Sigmoid colon (tissue), 7 donors: ENCODE measurements at regions of chr2 and their contacts with region 1.

Region 1: DNA sequence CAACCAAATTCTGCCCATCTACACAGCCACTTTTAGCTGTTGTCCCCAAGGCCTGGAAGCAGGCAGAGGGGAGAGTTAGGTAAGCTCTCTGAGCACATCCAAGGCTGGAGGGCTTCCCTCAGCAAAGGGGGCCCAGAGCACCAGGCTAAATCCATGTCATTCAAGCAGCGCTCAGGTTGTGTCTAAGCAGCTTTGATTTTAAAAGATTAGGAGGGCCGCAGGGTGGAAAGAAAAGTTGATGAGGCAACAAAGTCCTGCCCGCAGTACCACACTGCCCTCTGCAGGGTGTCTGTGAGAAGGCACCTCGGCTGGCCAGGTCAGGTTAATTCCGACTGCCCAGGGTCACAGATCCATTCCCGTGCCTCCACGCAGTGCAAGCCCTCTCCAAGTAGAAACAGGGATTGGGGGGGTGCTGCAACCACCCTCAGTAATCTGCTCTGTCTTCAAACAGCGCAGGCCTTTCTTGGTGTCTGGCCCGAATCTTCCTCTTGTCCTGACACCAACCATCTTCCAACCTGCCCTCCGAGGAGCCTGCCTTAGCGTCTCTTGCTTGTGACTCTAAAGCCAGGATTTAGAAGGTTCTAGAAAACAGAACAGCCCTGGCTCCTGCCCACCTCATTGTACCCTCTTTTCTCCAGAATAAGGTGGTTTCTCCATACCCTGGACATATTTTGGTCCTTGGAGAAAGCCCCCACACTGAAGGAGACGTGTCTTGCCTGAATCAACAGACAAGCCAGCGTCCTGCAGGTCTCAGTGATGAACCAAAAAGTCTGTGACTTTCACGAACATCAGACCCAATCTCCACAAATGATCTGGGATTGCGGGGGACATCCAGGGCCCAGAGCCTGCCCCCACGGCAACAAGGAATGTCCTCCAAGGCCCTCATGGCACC is 289.2 kb downstream of the TNS1 start:
- DNase-seq: peak; percentile 91
- H3K4me3 ChIP-seq: no peak overlapping the region
- H3K27ac ChIP-seq: peak overlapping the region; percentile 50 to 76 (median 72)
- H3K4me1 ChIP-seq: peaks cover 0 to 48% (median 43%) of the 10 kb centered on the region in 4 donors
- H3K27me3 ChIP-seq: no peaks in the 10 kb centered on the region
- CTCF ChIP-seq: peak; percentile 93 to 99 (median 95)
- EP300 ChIP-seq: no peak
- POLR2A ChIP-seq: no peak

Region 2: DNA sequence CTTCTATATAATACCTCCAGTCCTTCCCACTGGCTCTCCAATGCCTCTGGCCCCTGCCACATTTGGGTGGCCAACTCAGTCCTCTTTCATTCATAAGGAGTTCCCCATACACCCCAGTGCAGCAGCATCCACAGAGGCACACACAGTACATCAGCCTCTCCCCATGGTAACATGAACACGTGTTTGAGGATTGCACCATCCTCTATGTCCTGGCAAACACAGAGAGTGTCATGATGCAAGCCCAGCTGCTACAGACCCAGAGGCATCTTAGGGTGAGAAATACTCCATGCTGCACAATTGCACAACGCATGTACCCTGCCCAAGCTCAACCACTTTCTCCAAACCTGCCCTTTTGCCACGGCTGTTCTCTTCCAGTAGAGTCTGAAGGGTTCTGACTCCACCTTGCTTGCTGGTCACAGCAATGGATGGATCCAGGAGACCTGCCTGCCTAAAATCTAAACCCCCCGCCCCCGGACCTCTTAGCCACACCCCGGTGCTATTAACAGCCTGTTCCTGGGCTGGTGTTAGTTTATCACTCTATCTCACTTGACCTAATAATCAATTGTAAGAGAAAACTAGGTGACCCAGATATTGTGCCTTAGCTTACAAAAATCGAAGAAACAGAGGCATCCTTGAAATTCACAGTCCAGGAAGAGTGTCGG is 1029.7 kb before region 1 on chr2:
- intact Hi-C with region 1: loop called (anchors 5 kb)
- DNase-seq: peak; percentile 95
- H3K4me3 ChIP-seq: no peak overlapping the region
- H3K27ac ChIP-seq: peak overlapping the region; percentile 80 to 93 (median 88)
- H3K4me1 ChIP-seq: peaks cover 0 to 100% (median 97%) of the 10 kb centered on the region in 4 donors
- H3K27me3 ChIP-seq: no peaks in the 10 kb centered on the region
- CTCF ChIP-seq: no peak
- EP300 ChIP-seq: peak in 3 of 4 donors; percentile 64 to 86 (median 81)
- POLR2A ChIP-seq: no peak

Region 3: DNA sequence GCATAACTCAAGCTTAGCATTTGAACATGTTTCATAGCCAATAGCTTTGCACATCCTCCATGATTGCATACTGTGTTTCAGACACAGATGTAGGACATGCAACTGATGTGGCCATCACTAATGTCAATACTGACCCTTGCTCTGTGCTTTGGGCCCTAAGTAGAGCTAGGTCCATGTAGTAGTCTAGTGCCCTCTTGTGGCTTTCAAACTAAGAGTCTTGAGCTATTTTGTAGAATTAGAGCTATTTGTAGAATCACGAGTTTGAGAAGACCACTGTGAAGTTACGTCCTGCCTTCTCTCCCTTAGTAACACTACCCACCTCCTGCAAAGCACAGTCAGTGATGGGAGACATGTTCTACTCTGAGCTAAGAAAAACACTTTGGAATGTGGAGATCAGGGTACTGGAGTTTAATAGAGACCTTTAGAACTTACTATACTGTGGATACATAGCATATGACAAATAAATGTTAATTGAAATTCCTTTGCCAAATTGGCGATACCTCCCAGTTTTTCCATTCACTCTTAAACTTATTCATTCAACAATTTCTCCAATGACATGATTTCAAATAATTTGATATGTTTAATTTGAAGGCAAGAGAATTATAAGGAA is 547.3 kb before region 1 on chr2:
- intact Hi-C with region 1: loop called (anchors 10 kb)
- DNase-seq: no peak
- H3K4me3 ChIP-seq: no peak overlapping the region
- H3K27ac ChIP-seq: no peak overlapping the region
- H3K4me1 ChIP-seq: peaks cover 0 to 24% (median 11%) of the 10 kb centered on the region in 4 donors
- H3K27me3 ChIP-seq: no peaks in the 10 kb centered on the region
- CTCF ChIP-seq: peak in 3 of 4 experiments; percentile 30 to 50 (median 32)
- EP300 ChIP-seq: no peak
- POLR2A ChIP-seq: no peak

Region 4: DNA sequence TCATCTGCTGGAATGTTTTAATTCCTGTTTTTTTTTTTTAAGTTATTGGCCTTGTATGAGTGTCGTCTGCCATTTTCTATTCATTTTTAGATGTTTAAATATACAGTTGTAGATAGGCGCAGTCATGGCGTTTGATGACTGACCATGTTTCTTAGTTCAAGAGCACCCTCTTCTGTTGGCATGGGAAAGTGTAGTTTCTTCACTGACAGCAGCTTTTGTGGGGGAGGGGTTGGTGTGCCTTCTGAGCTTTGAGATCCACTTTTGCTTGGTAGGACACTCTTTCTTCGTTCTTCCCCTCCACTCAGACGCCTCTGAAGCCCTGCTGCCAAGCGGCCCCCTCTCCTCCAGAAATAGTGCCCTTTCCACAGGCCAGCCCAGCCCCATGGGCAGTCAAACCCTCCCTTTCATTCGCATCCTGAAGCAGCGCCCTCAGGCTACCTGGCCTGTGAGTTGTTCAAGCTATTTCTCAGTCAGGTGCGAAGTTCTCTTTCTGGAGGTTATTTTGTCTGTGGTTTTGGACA is 202.8 kb before region 1 on chr2:
- intact Hi-C with region 1: loop called (anchors 5 kb)
- DNase-seq: peak; percentile 85
- H3K4me3 ChIP-seq: no peak overlapping the region
- H3K27ac ChIP-seq: peak overlapping the region in 3 of 4 donors; percentile 3 to 39 (median 18)
- H3K4me1 ChIP-seq: peaks cover 0 to 39% (median 15%) of the 10 kb centered on the region in 4 donors
- H3K27me3 ChIP-seq: no peaks in the 10 kb centered on the region
- CTCF ChIP-seq: peak; percentile 58 to 88 (median 82)
- EP300 ChIP-seq: peak in 1 of 4 donors; percentile 24
- POLR2A ChIP-seq: no peak

Region 5: DNA sequence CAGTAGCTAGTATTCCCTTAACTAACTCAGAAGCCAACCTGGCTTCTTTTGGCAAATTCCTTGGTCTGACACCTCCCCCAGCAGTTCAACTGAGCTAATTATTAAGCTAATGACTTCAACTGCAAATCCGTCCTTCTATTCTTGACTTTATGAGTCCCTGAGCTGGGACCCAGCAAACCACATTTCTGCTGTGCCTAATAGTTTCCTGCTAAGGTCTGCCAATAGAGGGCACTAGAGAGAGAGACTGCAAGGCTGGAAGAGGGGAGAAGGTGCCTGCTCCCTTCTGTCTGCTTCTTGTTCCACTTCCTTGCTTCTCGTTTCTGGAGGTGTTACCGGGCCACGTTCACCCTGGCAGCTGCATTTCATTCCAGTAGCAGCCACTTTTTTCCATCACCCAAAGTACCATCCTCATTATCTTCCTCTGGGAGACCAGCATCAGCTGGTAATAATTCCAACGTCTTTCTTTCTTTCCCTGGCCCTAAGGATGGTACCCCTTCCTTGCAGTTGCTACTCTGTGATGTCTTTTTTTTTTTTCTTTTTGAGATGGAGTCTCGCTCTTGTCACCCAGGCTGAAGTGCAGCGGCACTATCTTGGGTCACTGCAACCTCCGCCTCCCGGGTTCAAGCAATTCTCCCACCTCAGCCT is 62.8 kb before region 1 on chr2:
- intact Hi-C with region 1: loop called (anchors 5 kb)
- DNase-seq: no peak
- H3K4me3 ChIP-seq: no peak overlapping the region
- H3K27ac ChIP-seq: peak overlapping the region in 2 of 4 donors; percentile 11 to 30
- H3K4me1 ChIP-seq: peaks cover 0 to 46% (median 28%) of the 10 kb centered on the region in 4 donors
- H3K27me3 ChIP-seq: no peaks in the 10 kb centered on the region
- CTCF ChIP-seq: peak; percentile 24 to 58 (median 52)
- EP300 ChIP-seq: no peak
- POLR2A ChIP-seq: no peak

Region 6: GRCh38 chr2:217785544-217786045 is 72.0 kb after region 1 on chr2:
- intact Hi-C with region 1: no loop called
- DNase-seq: peak; percentile 91
- H3K4me3 ChIP-seq: no peak overlapping the region
- H3K27ac ChIP-seq: peak overlapping the region; percentile 27 to 71 (median 58)
- H3K4me1 ChIP-seq: peaks cover 0 to 17% (median 8%) of the 10 kb centered on the region in 4 donors
- H3K27me3 ChIP-seq: no peaks in the 10 kb centered on the region
- CTCF ChIP-seq: peak; percentile 90 to 97 (median 94)
- EP300 ChIP-seq: no peak
- POLR2A ChIP-seq: no peak

Region 7: GRCh38 chr2:217858519-217859491 is 145.2 kb after region 1 on chr2:
- intact Hi-C with region 1: no loop called
- DNase-seq: peak; percentile 94
- H3K4me3 ChIP-seq: peak overlapping the region; percentile 21 to 38 (median 35)
- H3K27ac ChIP-seq: peak overlapping the region; percentile 83 to 98 (median 92)
- H3K4me1 ChIP-seq: peaks cover 0 to 100% (median 100%) of the 10 kb centered on the region in 4 donors
- H3K27me3 ChIP-seq: no peaks in the 10 kb centered on the region
- CTCF ChIP-seq: no peak
- EP300 ChIP-seq: no peak
- POLR2A ChIP-seq: peak in 1 of 2 donors; percentile 24

Region 8: GRCh38 chr2:218429571-218430301 is 716.1 kb after region 1 on chr2:
- intact Hi-C with region 1: no loop called
- DNase-seq: peak; percentile 60
- H3K4me3 ChIP-seq: no peak overlapping the region
- H3K27ac ChIP-seq: no peak overlapping the region
- H3K4me1 ChIP-seq: no peaks in the 10 kb centered on the region
- H3K27me3 ChIP-seq: no peaks in the 10 kb centered on the region
- CTCF ChIP-seq: no peak
- EP300 ChIP-seq: no peak
- POLR2A ChIP-seq: no peak